ENCODE measurements at regions of chrX and their contacts with region 1.

Region 1: DNA sequence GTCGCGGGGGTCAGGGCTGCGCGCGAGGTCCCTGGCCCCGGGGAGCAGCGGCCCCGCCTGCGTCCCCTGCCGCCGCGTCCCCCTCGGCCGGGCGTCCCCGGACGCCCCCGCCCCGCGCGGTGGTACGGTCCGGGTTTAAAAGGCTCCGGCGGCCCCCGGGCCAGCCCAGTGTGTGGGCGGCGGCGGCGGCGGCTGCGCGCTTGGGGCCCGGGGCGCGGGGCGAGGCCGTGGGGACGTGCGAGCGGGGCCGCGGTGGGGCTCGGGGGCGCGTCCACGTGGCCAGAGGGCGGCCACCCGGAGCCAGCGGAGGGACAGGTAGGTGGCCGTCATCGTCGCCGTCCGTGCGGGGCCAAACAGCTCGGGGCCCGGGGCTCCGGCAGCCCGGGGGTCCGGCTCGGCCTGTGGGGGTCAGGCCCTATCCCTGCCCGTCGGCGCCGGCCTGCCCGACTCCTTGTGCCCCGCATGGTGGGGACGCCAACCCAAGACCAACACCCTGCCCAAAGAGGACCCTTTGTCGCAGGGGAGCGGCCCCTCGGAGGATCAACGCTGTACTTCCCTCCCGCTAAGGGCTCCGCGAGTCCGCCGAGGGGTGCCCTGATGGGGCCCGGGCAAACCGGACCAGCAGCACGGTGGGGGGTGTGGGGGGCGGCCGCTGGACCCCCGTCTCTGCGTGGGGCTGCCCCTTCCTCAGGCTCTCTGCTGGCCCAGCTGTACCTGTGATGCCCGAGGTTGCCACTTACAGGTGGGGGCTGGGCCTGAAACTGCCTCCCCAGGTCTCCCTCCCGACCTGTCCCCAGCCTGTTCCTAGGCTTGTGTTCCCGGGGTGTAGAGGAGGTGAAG is at the start of gene PLXNA3:
- DNase-seq: peak in 4 of 5 donors; percentile 70 to 79 (median 74)
- H3K4me3 ChIP-seq: peak within 1 kb of the TSS; percentile 17 to 55
- H3K4me3 Mint-ChIP-seq: peak within 1 kb of the TSS; percentile 89 to 97 (median 94)
- H3K27ac ChIP-seq: peak within 1 kb of the TSS; percentile 55
- H3K27ac Mint-ChIP-seq: peak within 1 kb of the TSS; percentile 74 to 97 (median 95)
- H3K4me1 ChIP-seq: peaks cover 9% of the 10 kb centered on the region
- H3K4me1 Mint-ChIP-seq: peaks cover 4 to 19% (median 6%) of the 10 kb centered on the region in 4 donors
- H3K27me3 ChIP-seq: no peaks in the 10 kb centered on the region
- H3K27me3 Mint-ChIP-seq: no peaks in the 10 kb centered on the region
- total RNA-seq, gene PLXNA3: 78.8 to 90.3 TPM

Region 2: GRCh38 chrX:153750127-153750774 is 708.1 kb before region 1 on chrX:
- CTCF ChIA-PET with region 1: no interaction called
- POLR2A ChIA-PET with region 1: no interaction called
- intact Hi-C with region 1: no loop called
- DNase-seq: no peak
- H3K4me3 ChIP-seq: no peak overlapping the region
- H3K4me3 Mint-ChIP-seq: no peak overlapping the region
- H3K27ac ChIP-seq: no peak overlapping the region
- H3K27ac Mint-ChIP-seq: no peak overlapping the region
- H3K4me1 ChIP-seq: no peaks in the 10 kb centered on the region
- H3K4me1 Mint-ChIP-seq: peaks cover 0 to 1% (median 0%) of the 10 kb centered on the region in 4 donors
- H3K27me3 ChIP-seq: no peaks in the 10 kb centered on the region
- H3K27me3 Mint-ChIP-seq: peaks cover 0 to 1% of the 10 kb centered on the region in 2 donors

Region 3: DNA sequence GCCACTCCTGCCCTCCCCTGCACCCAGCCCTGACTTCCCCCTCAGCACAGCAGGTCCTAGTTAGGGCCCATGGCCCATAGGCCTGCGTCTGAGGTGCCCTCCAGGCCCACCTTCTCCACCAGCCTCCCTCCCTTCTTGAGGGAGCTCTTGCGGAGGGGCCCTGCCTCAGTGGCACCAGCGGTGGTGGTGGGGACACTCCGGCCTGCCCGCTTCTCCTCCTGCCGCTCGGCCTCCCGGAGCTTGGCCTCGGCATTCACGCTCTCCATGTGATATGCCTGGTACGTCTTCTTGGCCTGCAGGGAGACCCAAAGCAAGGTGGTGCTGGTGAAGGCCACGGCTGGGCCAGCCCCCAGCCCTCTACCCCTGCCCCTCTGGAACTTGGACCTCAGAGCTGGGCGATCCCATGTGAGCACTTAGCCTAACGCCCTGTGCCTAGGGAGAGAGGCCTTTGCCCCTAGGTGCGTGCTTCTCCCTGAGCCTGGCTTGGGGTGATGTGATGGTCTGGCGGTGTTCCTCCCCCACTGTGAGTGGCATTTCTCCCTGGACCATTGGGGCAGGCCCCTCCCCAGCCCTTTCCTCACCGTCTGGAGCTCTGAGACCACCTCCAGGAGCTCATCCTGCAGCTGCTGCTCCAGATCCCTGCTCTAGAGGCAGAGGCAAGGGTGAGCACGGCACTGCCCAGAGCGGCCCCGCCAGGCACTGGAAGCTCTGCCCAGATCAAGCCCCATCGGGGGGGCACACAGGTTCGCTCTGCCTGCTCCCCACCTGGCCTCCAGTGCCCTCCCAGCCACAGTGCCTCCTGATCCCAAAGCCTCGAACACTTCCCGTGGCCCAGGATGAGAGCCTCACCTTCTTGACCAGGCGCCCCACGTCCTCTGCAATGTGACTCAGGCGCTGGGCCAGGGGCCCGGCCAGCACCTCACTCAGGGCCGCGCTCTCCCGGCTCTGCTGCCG is 537.5 kb before region 1 on chrX:
- CTCF ChIA-PET with region 1: no interaction called
- POLR2A ChIA-PET with region 1: no interaction called
- intact Hi-C with region 1: no loop called
- DNase-seq: no peak
- H3K4me3 ChIP-seq: no peak overlapping the region
- H3K4me3 Mint-ChIP-seq: no peak overlapping the region
- H3K27ac ChIP-seq: no peak overlapping the region
- H3K27ac Mint-ChIP-seq: peak overlapping the region in 1 of 7 donors; percentile 47
- H3K4me1 ChIP-seq: peaks cover 32% of the 10 kb centered on the region
- H3K4me1 Mint-ChIP-seq: peaks cover 10 to 52% (median 30%) of the 10 kb centered on the region in 4 donors
- H3K27me3 ChIP-seq: no peaks in the 10 kb centered on the region
- H3K27me3 Mint-ChIP-seq: no peaks in the 10 kb centered on the region

Region 4: GRCh38 chrX:154411322-154411980 is 46.9 kb before region 1 on chrX and contains the start of gene TAFAZZIN:
- CTCF ChIA-PET with region 1: no interaction called
- POLR2A ChIA-PET with region 1: interaction called, 17 read pairs
- intact Hi-C with region 1: no loop called
- DNase-seq: peak; percentile 70 to 76 (median 75)
- H3K4me3 ChIP-seq: peak within 1 kb of the TSS; percentile 42 to 51
- H3K4me3 Mint-ChIP-seq: peak within 1 kb of the TSS; percentile 87 to 98 (median 90)
- H3K27ac ChIP-seq: peak within 1 kb of the TSS; percentile 70
- H3K27ac Mint-ChIP-seq: peak within 1 kb of the TSS; percentile 90 to 95 (median 94)
- H3K4me1 ChIP-seq: peaks cover 10% of the 10 kb centered on the region
- H3K4me1 Mint-ChIP-seq: peaks cover 4 to 24% (median 11%) of the 10 kb centered on the region in 4 donors
- H3K27me3 ChIP-seq: no peaks in the 10 kb centered on the region
- H3K27me3 Mint-ChIP-seq: no peaks in the 10 kb centered on the region
- total RNA-seq, gene TAFAZZIN: 139 to 141 TPM

Region 5: GRCh38 chrX:154428176-154429010 is 29.9 kb before region 1 on chrX and contains the start of gene ATP6AP1:
- CTCF ChIA-PET with region 1: no interaction called
- POLR2A ChIA-PET with region 1: interaction called, 11 read pairs
- intact Hi-C with region 1: no loop called
- DNase-seq: peak; percentile 84 to 89 (median 89)
- H3K4me3 ChIP-seq: peak within 1 kb of the TSS; percentile 61 to 62
- H3K4me3 Mint-ChIP-seq: peak within 1 kb of the TSS; percentile 74 to 89 (median 84)
- H3K27ac ChIP-seq: peak within 1 kb of the TSS; percentile 65
- H3K27ac Mint-ChIP-seq: peak within 1 kb of the TSS; percentile 72 to 93 (median 86)
- H3K4me1 ChIP-seq: peaks cover 28% of the 10 kb centered on the region
- H3K4me1 Mint-ChIP-seq: peaks cover 13 to 30% (median 23%) of the 10 kb centered on the region in 4 donors
- H3K27me3 ChIP-seq: no peaks in the 10 kb centered on the region
- H3K27me3 Mint-ChIP-seq: no peaks in the 10 kb centered on the region
- total RNA-seq, gene ATP6AP1: 60.4 to 62.6 TPM

Region 6: DNA sequence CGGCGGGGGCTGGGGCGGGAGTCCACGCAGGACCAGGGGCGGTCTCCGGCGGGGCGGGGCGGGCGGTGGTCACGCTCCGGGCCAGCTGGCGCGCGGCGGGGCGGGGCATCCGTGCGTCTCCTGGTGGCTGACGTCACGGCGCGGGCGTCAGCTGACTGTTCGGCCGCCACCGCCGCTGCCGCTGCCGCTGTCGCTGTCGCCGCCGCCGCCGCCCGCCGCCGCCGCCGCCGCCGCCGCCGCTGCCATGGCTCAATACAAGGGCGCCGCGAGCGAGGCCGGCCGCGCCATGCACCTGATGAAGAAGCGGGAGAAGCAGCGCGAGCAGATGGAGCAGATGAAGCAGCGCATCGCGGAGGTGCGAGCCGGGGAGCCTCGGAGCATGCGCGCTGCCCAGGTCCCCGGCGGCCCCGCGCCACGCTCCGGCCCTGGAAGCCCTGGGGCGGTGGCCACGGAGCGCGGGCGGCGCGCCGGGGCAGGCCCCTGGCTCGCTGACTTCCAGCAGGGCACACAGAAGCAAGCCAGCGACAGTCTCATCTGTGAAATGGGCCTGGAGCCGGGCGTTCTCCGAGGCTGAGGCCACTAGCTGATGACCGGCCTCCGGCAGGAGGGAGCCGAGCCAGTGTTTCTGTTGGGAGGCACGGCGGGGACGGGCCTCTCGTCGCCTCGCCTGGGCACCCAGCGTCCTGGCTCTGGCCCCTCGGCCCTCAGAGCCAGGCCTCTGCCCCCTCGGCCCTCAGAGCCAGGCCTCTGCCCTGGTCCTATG is 14.2 kb before region 1 on chrX and contains the start of gene FAM50A:
- CTCF ChIA-PET with region 1: no interaction called
- POLR2A ChIA-PET with region 1: interaction called, 42 read pairs
- intact Hi-C with region 1: no loop called
- DNase-seq: peak; percentile 59 to 67 (median 62)
- H3K4me3 ChIP-seq: peak within 1 kb of the TSS; percentile 3 to 45
- H3K4me3 Mint-ChIP-seq: peak within 1 kb of the TSS; percentile 63 to 86 (median 77)
- H3K27ac ChIP-seq: peak within 1 kb of the TSS; percentile 69
- H3K27ac Mint-ChIP-seq: peak within 1 kb of the TSS; percentile 81 to 95 (median 89)
- H3K4me1 ChIP-seq: peaks cover 49% of the 10 kb centered on the region
- H3K4me1 Mint-ChIP-seq: peaks cover 7 to 51% (median 23%) of the 10 kb centered on the region in 4 donors
- H3K27me3 ChIP-seq: no peaks in the 10 kb centered on the region
- H3K27me3 Mint-ChIP-seq: no peaks in the 10 kb centered on the region
- total RNA-seq, gene FAM50A: 65.2 to 70.3 TPM

Region 7: GRCh38 chrX:154478728-154479622 is 20.6 kb after region 1 on chrX and contains the start of gene LAGE3:
- CTCF ChIA-PET with region 1: interaction called, 3 read pairs
- POLR2A ChIA-PET with region 1: interaction called, 37 read pairs
- intact Hi-C with region 1: loop called (anchors 2 kb)
- DNase-seq: peak; percentile 89 to 96 (median 94)
- H3K4me3 ChIP-seq: peak within 1 kb of the TSS in 1 of 2 donors; percentile 55
- H3K4me3 Mint-ChIP-seq: peak within 1 kb of the TSS; percentile 78 to 87 (median 83)
- H3K27ac ChIP-seq: peak within 1 kb of the TSS; percentile 76
- H3K27ac Mint-ChIP-seq: peak within 1 kb of the TSS; percentile 87 to 97 (median 91)
- H3K4me1 ChIP-seq: peaks cover 21% of the 10 kb centered on the region
- H3K4me1 Mint-ChIP-seq: peaks cover 5 to 19% (median 10%) of the 10 kb centered on the region in 4 donors
- H3K27me3 ChIP-seq: no peaks in the 10 kb centered on the region
- H3K27me3 Mint-ChIP-seq: no peaks in the 10 kb centered on the region
- total RNA-seq, gene LAGE3: 18.5 to 19.3 TPM

Region 8: DNA sequence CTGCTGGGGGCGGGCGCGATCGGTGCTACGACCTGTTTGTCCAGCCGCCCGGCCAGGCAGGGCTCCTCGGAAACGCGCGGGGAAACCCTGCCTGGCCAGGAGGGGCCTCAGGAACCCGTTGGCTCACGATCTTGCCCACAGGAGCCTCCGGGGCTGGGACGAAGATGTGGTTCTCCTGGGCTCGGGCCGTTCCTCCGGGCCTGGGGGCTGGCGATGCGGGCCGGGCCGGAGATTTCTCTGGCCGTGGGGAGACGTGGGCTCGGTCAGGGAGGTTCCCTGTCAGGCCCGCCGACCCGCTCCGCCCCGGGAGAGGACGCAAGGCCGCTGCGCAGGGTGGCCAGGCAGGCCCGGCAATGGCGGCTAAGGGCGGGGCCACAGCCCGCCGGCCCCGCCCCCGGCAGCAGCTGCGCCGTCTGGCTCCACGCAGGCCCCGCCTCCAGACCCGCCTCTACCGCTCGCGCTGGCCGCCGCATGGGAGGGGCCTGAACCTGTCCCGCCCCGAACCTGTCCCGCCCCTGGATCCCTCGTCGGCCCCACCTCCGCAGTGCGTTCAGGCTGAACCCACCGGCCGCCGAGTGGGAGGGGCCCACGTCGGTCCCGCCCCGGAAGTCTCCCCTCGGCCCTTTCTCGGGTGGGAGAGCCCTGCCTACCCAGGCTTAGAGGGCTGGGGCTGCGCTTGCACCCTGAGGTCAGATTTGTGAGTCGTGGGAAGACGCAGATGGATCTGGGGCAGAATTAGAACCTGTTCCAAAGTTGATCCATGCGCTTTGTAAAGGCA is 57.7 kb after region 1 on chrX and contains the start of gene FAM3A:
- CTCF ChIA-PET with region 1: no interaction called
- POLR2A ChIA-PET with region 1: interaction called, 12 read pairs
- intact Hi-C with region 1: loop called (anchors 5 kb)
- DNase-seq: peak; percentile 87 to 90 (median 89)
- H3K4me3 ChIP-seq: peak within 1 kb of the TSS; percentile 42 to 56
- H3K4me3 Mint-ChIP-seq: peak within 1 kb of the TSS; percentile 83 to 88 (median 85)
- H3K27ac ChIP-seq: peak within 1 kb of the TSS; percentile 81
- H3K27ac Mint-ChIP-seq: peak within 1 kb of the TSS; percentile 74 to 95 (median 92)
- H3K4me1 ChIP-seq: peaks cover 18% of the 10 kb centered on the region
- H3K4me1 Mint-ChIP-seq: peaks cover 10 to 30% (median 17%) of the 10 kb centered on the region in 4 donors
- H3K27me3 ChIP-seq: no peaks in the 10 kb centered on the region
- H3K27me3 Mint-ChIP-seq: no peaks in the 10 kb centered on the region
- total RNA-seq, gene FAM3A: 51.0 to 51.8 TPM